ENCODE measurements at regions of chr16 and their contacts with region 1.

Region 1: GRCh38 chr16:75464130-75464918 is at the start of gene TMEM170A:
- DNase-seq: peak; percentile 99 to 100
- H3K4me3 ChIP-seq: peak within 1 kb of the TSS; percentile 64 to 89 (median 84)
- H3K27ac ChIP-seq: peak within 1 kb of the TSS; percentile 82 to 95 (median 86)
- H3K4me1 ChIP-seq: peaks cover 6 to 16% of the 10 kb centered on the region in 2 donors
- H3K27me3 ChIP-seq: no peaks in the 10 kb centered on the region
- CTCF ChIP-seq: peak; percentile 99 to 100 (median 100)
- POLR2A ChIP-seq: peak; percentile 21 to 94
- total RNA-seq, gene TMEM170A: 27.1 to 41.9 (median 30.7) TPM

Region 2: DNA sequence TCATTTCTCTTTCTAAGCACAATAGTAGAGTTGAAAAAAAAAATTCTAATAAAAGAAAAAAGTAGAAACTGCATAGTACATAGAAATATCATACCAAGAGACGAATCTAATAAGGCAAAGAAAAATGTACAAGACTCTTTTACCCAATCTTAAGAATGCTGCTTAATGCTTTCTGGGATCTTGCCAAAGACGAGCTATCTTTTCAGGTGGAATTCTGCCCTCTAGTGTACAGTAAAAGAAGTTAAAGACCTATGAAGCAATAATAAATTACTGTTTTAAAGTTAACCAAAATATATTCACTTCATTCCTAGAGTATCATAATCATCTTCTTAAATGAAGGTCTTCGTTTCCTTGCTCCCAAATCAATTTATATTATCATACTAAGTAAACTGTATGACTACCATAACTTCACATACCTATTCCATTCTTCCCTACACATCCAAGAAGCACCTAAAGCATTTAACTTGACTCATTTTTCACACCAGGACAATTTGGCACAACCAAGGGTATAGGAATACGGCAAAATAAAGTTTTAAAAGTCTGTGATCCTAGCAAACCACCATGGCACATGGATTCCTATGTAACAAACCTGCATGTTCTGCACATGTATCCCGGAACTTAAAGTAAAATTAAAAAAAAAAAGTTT is 78.7 kb before region 1 on chr16:
- intact Hi-C with region 1: no loop called
- DNase-seq: no peak
- H3K4me3 ChIP-seq: no peak overlapping the region
- H3K27ac ChIP-seq: no peak overlapping the region
- H3K4me1 ChIP-seq: peaks cover 4 to 10% of the 10 kb centered on the region in 2 donors
- H3K27me3 ChIP-seq: no peaks in the 10 kb centered on the region
- CTCF ChIP-seq: peak; percentile 58 to 94 (median 66)
- POLR2A ChIP-seq: no peak

Region 3: DNA sequence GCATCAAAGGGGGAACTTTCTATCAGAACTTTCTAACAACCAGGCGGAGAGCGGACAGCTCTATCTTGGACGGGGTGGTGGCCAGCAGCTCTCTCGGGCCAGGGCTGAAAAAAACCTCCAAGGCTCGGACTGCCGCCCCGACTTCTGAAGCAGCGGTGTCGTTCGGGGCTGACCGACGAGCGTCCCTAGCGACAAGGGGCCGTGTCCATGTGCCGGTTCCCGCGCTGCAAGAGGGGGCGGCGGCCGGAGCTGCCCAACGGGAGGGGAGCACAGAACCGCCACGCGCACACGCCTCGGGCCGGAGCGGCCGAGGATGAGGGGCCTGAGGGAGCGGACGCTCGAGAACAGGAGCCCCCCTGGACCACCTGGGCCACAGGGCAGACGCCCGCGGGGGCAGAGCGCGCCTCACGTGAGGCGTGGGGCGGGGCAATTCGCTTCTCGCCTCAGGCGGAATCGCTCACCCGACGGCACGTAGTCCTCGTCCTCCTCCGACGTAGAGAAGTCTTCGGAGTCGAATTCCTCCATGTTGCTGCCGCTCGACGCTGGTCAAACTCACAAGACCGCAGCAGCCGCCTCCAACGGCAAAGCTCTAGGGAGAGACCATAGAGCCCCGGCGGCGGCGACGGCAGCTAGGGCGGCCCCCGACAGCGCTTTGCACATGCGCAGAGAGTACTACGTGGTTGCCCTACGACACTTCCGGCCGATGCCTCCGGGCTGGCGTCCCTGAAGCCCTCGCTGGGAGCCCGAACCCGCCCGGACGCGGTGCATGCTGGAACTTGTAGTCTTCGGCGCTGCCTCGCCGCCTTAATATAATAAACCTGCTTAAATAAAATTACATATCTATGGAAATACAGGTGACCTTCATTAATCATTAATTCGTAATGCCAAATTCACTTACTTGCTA is 31.2 kb before region 1 on chr16 and contains the start of gene CFDP1:
- intact Hi-C with region 1: loop called (anchors 2 kb)
- DNase-seq: peak; percentile 96 to 97
- H3K4me3 ChIP-seq: peak within 1 kb of the TSS; percentile 48 to 97 (median 78)
- H3K27ac ChIP-seq: peak within 1 kb of the TSS; percentile 92 to 99 (median 98)
- H3K4me1 ChIP-seq: peaks cover 0 to 25% of the 10 kb centered on the region in 2 donors
- H3K27me3 ChIP-seq: no peaks in the 10 kb centered on the region
- CTCF ChIP-seq: no peak
- POLR2A ChIP-seq: peak; percentile 62 to 86
- total RNA-seq, gene CFDP1: 50.5 to 77.9 (median 60.7) TPM

Region 4: GRCh38 chr16:75801307-75801706 is 337.0 kb after region 1 on chr16:
- intact Hi-C with region 1: no loop called
- DNase-seq: no peak
- H3K4me3 ChIP-seq: no peak overlapping the region
- H3K27ac ChIP-seq: no peak overlapping the region
- H3K4me1 ChIP-seq: no peaks in the 10 kb centered on the region
- H3K27me3 ChIP-seq: no peaks in the 10 kb centered on the region
- CTCF ChIP-seq: no peak
- POLR2A ChIP-seq: no peak

Measured in thyroid gland (tissue), 4 donors.